Activated naive CD4-positive, alpha-beta T cell treated with anti-CD3 and anti-CD28 coated beads for 36 hours (primary cell): ENCODE measurements at regions of chr15 and their contacts with region 1.

Region 1: DNA sequence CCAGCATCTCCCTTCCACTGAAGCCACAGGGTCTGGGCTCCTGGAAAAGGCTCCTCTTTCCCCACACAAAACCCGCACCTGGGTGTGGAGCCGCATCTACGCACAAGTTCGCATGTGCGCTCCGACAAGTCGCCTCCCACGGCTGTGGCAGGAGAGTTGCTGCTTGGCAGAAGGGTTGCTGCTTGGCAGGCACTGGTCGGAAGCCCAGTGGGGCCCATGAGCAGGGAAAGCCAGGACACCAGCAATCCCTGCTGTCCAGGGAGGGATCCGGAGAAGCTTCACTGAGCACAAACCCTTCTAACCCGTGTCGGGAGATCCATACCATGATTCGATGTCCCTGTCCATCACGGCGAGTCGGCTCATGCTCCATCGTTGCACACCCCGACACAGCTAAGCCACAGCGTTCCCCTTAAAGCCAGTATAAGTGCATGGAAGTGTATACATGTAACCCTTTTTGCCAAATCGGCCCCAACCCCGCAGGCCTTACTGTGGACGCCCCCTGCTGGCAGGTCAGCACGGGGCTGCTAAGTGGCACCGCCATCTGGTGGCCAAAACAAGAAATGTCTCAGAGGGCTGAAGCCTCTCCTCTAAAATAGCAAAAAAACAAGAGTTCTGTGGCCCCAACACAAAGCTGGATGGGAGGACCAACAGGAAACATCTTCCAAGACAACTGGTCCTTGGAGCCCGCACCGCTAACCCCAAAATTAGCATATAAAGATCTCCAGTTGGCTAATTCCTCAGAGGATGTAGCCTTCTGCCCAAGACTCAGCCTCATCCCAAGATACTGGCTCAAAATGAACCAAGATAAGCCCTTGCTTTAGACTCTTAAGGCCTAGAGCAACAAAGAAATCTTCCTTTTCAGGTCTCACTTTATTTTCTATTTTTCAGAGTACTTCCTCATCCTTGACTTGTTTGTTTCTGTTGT is 8.3 kb downstream of the ANKRD63 start:
- DNase-seq: peak; percentile 92
- H3K4me3 Mint-ChIP-seq: no peak overlapping the region
- H3K27ac Mint-ChIP-seq: no peak overlapping the region
- H3K4me1 Mint-ChIP-seq: peaks cover 2% of the 10 kb centered on the region
- H3K27me3 Mint-ChIP-seq: peaks cover 23% of the 10 kb centered on the region

Region 2: DNA sequence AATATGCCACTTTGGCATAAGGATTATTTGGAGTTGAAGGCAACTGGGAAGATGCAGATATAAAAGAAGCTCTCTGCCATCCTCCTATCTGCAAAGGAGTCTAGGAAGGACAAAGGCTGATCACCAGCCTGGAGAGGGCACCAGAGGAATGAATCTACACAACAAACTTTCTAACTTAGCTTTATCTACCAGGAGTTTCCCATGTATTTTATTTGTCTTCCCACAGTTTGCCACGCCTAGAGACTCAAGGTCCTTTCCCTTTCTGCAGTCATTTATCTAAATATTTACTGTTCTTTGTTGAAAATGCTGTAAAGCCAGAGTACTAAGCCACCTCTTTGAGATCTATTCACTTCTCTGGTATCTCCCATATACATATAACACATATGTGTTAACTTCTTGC is 386.8 kb before region 1 on chr15:
- CTCF ChIA-PET with region 1: interaction called, 4 read pairs
- intact Hi-C with region 1: loop called (anchors 1 kb)
- DNase-seq: peak; percentile 30
- H3K4me3 Mint-ChIP-seq: no peak overlapping the region
- H3K27ac Mint-ChIP-seq: no peak overlapping the region
- H3K4me1 Mint-ChIP-seq: no peaks in the 10 kb centered on the region
- H3K27me3 Mint-ChIP-seq: peaks cover 4% of the 10 kb centered on the region

Region 3: GRCh38 chr15:40098489-40099261 is 175.9 kb before region 1 on chr15:
- CTCF ChIA-PET with region 1: interaction called, 21 read pairs
- intact Hi-C with region 1: no loop called
- DNase-seq: peak; percentile 87
- H3K4me3 Mint-ChIP-seq: peak overlapping the region; percentile 54
- H3K27ac Mint-ChIP-seq: peak overlapping the region; percentile 96
- H3K4me1 Mint-ChIP-seq: peaks cover 70% of the 10 kb centered on the region
- H3K27me3 Mint-ChIP-seq: no peaks in the 10 kb centered on the region

Region 4: GRCh38 chr15:40217159-40217824 is 57.3 kb before region 1 on chr15:
- CTCF ChIA-PET with region 1: interaction called, 104 read pairs
- intact Hi-C with region 1: loop called (anchors 1 kb)
- DNase-seq: peak; percentile 47
- H3K4me3 Mint-ChIP-seq: no peak overlapping the region
- H3K27ac Mint-ChIP-seq: no peak overlapping the region
- H3K4me1 Mint-ChIP-seq: no peaks in the 10 kb centered on the region
- H3K27me3 Mint-ChIP-seq: no peaks in the 10 kb centered on the region

Region 5: GRCh38 chr15:40290918-40291574 is 16.4 kb after region 1 on chr15:
- CTCF ChIA-PET with region 1: interaction called, 15 read pairs
- intact Hi-C with region 1: no loop called
- DNase-seq: no peak
- H3K4me3 Mint-ChIP-seq: no peak overlapping the region
- H3K27ac Mint-ChIP-seq: no peak overlapping the region
- H3K4me1 Mint-ChIP-seq: no peaks in the 10 kb centered on the region
- H3K27me3 Mint-ChIP-seq: no peaks in the 10 kb centered on the region

Region 6: DNA sequence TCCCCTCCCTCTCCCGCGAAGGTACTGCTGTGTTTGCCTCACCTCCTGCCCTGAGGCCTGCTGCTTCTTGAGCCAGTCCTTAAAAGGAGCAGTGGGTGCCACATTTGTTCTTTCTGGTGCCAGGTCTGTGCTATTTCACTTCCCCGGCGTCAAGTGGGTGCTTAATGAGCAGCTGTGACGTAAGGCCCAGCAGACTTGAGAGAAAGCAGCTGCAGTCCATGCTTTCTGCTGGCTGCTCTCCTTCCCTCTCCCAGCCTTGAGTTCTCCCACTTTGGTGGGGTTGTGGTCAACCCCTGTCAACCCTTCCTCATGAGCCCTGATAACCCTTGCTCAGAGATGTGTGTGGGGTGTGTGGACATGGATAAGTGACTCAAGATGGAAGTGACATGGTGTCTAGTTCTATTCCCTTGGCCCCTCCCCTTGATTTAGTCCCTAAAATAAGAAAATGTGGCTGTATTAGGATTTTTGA is 55.8 kb after region 1 on chr15:
- CTCF ChIA-PET with region 1: interaction called, 246 read pairs
- intact Hi-C with region 1: no loop called
- DNase-seq: no peak
- H3K4me3 Mint-ChIP-seq: no peak overlapping the region
- H3K27ac Mint-ChIP-seq: no peak overlapping the region
- H3K4me1 Mint-ChIP-seq: peaks cover 19% of the 10 kb centered on the region
- H3K27me3 Mint-ChIP-seq: no peaks in the 10 kb centered on the region